Endothelial cell of umbilical vein (primary cell): ENCODE measurements at regions of chr12 and their contacts with region 1.

Region 1: GRCh38 chr12:22459838-22460490 is 84.4 kb downstream of the C2CD5 start:
- DNase-seq: peak; percentile 37
- H3K4me3 ChIP-seq: no peak overlapping the region
- H3K27ac ChIP-seq: no peak overlapping the region
- H3K4me1 ChIP-seq: no peaks in the 10 kb centered on the region
- H3K27me3 ChIP-seq: no peaks in the 10 kb centered on the region
- CTCF ChIP-seq: peak; percentile 40 to 44
- POLR2A ChIP-seq: no peak

Region 2: DNA sequence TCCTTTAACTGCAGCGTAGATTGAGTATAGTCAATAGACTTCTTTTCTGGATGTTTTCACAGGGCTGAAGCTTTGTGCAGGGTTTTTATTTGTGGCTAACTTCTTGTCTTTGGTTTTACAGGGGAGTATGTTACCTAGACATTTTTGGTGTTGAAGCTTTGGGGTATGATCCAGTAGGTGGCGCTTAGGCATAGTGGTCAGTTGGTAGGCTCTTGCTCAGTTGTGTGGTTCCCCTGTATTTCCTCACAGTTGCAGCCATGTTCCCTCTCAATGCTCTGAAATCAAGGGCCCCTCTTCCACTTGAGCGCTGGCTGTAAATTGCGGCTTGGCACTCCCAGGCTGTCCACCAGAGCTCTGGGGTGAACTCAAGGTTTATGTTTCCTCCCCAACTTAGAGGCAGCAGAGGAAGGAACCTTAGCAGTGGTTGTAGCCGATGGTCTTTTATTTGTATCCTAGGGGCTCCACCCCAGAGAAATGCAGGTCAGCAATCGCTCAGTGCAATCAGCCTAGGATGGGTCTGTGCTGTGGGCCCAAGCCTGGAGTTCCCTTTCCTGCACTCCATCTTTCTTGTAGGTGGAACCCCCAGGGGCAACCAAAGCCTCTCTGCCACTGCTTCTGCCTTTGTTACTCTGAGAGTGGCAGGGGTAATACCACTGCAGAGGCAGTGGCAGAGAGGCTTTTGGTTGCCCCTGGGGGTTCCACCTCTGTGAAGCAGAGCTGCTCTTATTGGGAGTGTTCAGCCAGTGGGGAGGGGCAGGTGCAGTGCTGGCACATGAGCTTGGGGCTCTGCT is 358.8 kb before region 1 on chr12:
- CTCF ChIA-PET with region 1: interaction called, 24 read pairs
- POLR2A ChIA-PET with region 1: no interaction called
- dilution Hi-C with region 1: no loop called
- intact Hi-C with region 1: no loop called
- DNase-seq: peak; percentile 57
- H3K4me3 ChIP-seq: no peak overlapping the region
- H3K27ac ChIP-seq: no peak overlapping the region
- H3K4me1 ChIP-seq: peaks cover 4% of the 10 kb centered on the region
- H3K27me3 ChIP-seq: peaks cover 3 to 6% of the 10 kb centered on the region in 2 experiments
- CTCF ChIP-seq: peak; percentile 42 to 77
- POLR2A ChIP-seq: no peak

Region 3: DNA sequence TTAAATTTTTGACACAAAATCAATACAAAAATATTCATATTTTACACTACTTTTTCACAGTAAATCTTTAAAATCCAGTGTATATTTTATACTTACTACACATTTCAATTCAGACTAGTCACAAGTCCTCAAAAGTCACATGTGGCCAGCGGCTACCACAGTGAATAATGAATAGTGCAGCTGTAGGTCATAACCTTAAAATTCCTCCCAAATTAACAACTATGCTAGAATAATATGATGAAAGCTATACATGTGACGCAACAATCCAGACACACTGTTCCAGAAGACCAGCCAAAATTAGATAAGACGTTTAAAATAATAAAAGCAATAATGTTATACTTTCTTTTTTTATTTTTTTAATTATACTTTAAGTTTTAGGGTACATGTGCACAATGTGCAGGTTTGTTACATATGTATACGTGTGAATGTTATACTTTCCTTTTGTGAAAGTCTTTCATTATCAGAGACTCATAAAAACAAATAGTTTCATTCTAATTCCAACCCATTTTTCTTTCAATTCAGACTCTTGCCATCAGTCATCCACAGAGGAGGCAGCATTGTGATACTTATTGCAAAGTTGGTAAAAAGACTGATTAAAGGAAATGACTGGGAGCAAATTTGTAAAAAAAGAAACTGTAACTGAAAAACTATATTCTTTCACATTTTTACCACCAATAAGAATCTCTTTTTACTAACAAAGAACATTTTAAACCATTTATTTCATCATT is 17.4 kb after region 1 on chr12:
- CTCF ChIA-PET with region 1: interaction called, 20 read pairs
- POLR2A ChIA-PET with region 1: no interaction called
- dilution Hi-C with region 1: no loop called
- intact Hi-C with region 1: no loop called
- DNase-seq: peak; percentile 51
- H3K4me3 ChIP-seq: no peak overlapping the region
- H3K27ac ChIP-seq: peak overlapping the region; percentile 34
- H3K4me1 ChIP-seq: peaks cover 11% of the 10 kb centered on the region
- H3K27me3 ChIP-seq: no peaks in the 10 kb centered on the region
- CTCF ChIP-seq: no peak
- POLR2A ChIP-seq: no peak

Region 4: GRCh38 chr12:22529281-22530060 is 69.5 kb after region 1 on chr12:
- CTCF ChIA-PET with region 1: interaction called, 15 read pairs
- POLR2A ChIA-PET with region 1: no interaction called
- dilution Hi-C with region 1: no loop called
- intact Hi-C with region 1: no loop called
- DNase-seq: peak; percentile 36
- H3K4me3 ChIP-seq: no peak overlapping the region
- H3K27ac ChIP-seq: peak overlapping the region; percentile 75
- H3K4me1 ChIP-seq: peaks cover 43% of the 10 kb centered on the region
- H3K27me3 ChIP-seq: no peaks in the 10 kb centered on the region
- CTCF ChIP-seq: peak in 1 of 2 donors; percentile 15
- POLR2A ChIP-seq: no peak

Region 5: DNA sequence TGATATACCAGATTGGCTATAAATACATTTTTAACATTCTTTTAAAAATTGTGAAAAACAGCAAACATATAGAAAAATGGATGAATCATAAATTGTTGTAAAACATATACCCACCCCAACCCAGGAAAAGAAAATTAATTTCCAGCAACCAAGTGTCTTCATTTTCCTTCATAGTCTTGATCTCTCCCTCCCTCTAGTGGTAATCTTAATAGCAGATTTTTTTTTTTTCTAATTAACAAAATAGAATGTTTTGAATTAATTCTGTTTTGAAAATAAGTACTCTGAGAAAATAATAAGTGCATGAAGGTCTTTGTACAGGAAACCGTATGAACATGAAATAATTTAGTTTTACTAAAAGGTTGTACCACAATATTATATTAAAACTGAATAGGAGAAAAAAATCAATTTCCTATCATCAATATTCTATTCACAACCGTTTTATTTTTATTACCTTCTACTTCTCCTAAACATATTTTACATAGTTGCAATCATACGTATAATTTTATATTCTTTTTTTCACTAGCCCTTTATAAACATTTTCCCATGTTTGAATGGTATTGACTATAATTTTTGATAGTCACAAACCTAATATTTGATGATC is 172.0 kb after region 1 on chr12:
- CTCF ChIA-PET with region 1: interaction called, 7 read pairs
- POLR2A ChIA-PET with region 1: no interaction called
- dilution Hi-C with region 1: no loop called
- intact Hi-C with region 1: loop called (anchors 5 kb)
- DNase-seq: peak; percentile 26
- H3K4me3 ChIP-seq: no peak overlapping the region
- H3K27ac ChIP-seq: no peak overlapping the region
- H3K4me1 ChIP-seq: peaks cover 18% of the 10 kb centered on the region
- H3K27me3 ChIP-seq: no peaks in the 10 kb centered on the region
- CTCF ChIP-seq: peak in 1 of 2 donors; percentile 13
- POLR2A ChIP-seq: no peak